HCT116 (cell line): ENCODE measurements at regions of chr10 and their contacts with region 1.

Region 1: DNA sequence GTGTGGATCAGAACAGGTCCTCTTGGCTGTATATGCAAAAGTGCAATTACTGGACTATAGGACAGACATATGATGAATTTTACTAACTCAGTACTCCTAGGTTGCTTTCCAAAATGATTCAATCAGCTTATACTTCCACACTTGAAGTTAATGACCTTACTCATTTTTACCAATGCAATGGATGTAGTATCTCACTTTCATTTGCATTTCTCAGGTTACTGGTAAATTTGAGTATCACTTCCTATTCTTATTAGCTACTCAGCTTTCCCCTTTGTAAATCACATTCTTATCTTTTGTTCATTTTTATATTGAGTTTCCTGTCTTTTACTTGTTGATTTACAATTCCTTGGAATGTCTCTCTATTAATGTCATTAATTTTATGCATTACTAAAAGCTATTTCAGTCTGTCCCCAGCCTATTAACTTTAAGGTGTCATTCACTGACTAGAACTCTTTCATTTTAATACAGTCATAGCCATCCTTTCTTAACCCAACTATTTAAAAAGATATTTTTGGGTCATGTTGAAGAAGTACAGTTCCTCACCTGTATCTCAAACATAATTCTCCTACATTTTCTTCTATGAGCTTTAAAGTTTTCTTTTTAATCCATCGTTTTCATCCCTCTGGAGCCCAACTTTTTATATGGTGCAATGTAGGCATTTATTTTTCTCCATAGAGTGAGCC is 88.6 kb downstream of the VIM start:
- DNase-seq: no peak
- ATAC-seq: no peak
- H3K4me3 ChIP-seq: no peak overlapping the region
- H3K27ac ChIP-seq: no peak overlapping the region
- H3K4me1 ChIP-seq: no peaks in the 10 kb centered on the region
- H3K27me3 ChIP-seq: no peaks in the 10 kb centered on the region
- CTCF ChIP-seq: no peak
- POLR2A ChIP-seq: no peak
- RAD21 ChIP-seq: no peak

Region 2: GRCh38 chr10:17365402-17365801 is 48.8 kb after region 1 on chr10:
- CTCF ChIA-PET with region 1: no interaction called
- POLR2A ChIA-PET with region 1: no interaction called
- RAD21 ChIA-PET with region 1: no interaction called
- intact Hi-C with region 1: loop called (anchors 1 kb)
- DNase-seq: no peak
- ATAC-seq: no peak
- H3K4me3 ChIP-seq: no peak overlapping the region
- H3K27ac ChIP-seq: no peak overlapping the region
- H3K4me1 ChIP-seq: peaks cover 0 to 5% of the 10 kb centered on the region in 2 experiments; a peak in 2 of 4 replicates
- H3K27me3 ChIP-seq: no peaks in the 10 kb centered on the region
- CTCF ChIP-seq: no peak
- POLR2A ChIP-seq: no peak
- RAD21 ChIP-seq: no peak